Activated CD8-positive, alpha-beta T cell treated with anti-CD3 and anti-CD28 coated beads, Interleukin-2, amount 10 ng/mL, durations not matched to agents 7 days and 5 days (primary cell): ENCODE measurements at regions of chr17 and their contacts with region 1.

Region 1: GRCh38 chr17:51537996-51538550 is 277.7 kb downstream of the UTP18 start:
- DNase-seq: no peak
- ATAC-seq: no peak
- H3K4me3 Mint-ChIP-seq: no peak overlapping the region
- H3K27ac Mint-ChIP-seq: no peak overlapping the region
- H3K4me1 Mint-ChIP-seq: peaks cover 9% of the 10 kb centered on the region
- H3K27me3 Mint-ChIP-seq: peaks cover 2% of the 10 kb centered on the region

Region 2: DNA sequence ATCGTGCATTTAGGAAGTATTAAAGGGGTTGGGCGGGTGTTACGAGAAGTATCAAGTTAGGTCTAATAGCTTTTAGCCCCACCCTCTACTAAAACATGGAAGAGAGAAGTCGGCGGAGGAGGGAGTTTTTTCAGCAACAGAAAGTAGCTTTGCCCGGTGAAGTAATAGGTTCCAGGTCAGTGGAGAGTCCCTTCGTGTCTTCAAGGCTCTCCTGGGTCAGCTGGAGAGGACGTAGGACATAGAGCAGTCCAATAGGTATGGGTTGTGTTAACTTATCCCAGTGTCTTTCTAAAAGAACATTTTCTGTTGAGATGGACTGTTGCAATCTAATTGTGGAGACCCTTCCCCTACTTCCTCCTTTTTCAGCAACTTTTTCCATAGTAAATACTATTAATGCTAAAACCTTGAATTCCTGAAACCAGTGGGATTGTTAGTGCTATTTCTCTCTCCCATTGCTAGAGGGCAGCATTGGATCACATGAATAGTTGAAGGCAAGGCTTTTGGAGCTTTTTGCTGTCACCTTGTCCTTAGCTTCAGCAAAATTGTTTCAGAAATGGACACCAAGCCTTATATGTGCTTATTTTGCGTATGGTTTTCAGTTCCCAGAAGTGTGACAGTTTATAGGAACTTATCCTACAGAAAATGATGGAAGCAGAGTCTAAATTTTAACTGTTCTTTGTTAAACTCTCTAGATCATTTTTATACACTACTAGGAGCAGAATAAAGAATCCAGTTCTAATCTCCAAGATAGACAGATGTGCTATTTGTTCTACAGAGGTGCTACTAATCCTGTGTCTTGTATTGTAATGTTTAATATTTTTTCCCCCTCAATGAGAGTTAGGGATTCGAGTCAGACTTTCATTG is 239.3 kb before region 1 on chr17:
- CTCF ChIA-PET with region 1: interaction called, 17 read pairs
- POLR2A ChIA-PET with region 1: no interaction called
- DNase-seq: no peak
- ATAC-seq: no peak
- H3K4me3 Mint-ChIP-seq: no peak overlapping the region
- H3K27ac Mint-ChIP-seq: no peak overlapping the region
- H3K4me1 Mint-ChIP-seq: peaks cover 8% of the 10 kb centered on the region
- H3K27me3 Mint-ChIP-seq: no peaks in the 10 kb centered on the region